ENCODE measurements at regions of chr1 and their contacts with region 1.

Region 1: GRCh38 chr1:7922301-7922700 is 18.3 kb downstream of the TNFRSF9 start:
- DNase-seq: no peak
- H3K4me3 ChIP-seq: no peak overlapping the region
- H3K27ac ChIP-seq: no peak overlapping the region
- H3K4me1 ChIP-seq: no peaks in the 10 kb centered on the region
- H3K27me3 ChIP-seq: no peaks in the 10 kb centered on the region
- CTCF ChIP-seq: no peak

Region 2: DNA sequence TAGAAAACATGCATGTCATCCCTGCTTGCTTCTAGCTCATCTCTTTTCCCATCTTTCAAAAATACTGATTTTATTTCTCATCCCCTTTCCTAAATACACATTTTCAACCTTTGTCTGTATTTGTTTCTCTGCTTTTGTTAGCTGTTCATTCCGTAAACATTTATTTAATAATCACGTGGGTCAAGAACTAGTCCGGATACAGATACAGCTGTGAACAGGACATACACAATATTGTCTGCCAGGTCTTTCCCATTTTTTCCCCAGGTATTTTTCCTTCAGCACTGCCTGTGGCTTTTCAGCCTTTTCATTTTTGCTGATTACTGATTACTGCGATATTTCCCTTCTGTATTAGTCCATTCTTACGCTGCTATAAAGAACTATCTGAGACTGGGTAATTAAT is 132.5 kb before region 1 on chr1:
- CTCF ChIA-PET with region 1: no interaction called
- POLR2A ChIA-PET with region 1: interaction called, 11 read pairs
- intact Hi-C with region 1: no loop called
- DNase-seq: no peak
- H3K4me3 ChIP-seq: no peak overlapping the region
- H3K27ac ChIP-seq: no peak overlapping the region
- H3K4me1 ChIP-seq: no peaks in the 10 kb centered on the region
- H3K27me3 ChIP-seq: no peaks in the 10 kb centered on the region
- CTCF ChIP-seq: no peak